Activated T-helper 2 cell treated with anti-CD3 and anti-CD28 coated beads, Interferon-gamma antibody, Interleukin-2, Interleukin-4, amounts not matched to agents 10 μg/mL and 5 μg/mL and 100 μg/mL, durations not matched to agents 14 hours and 24 hours and 36 hours (primary cell): ENCODE measurements at regions of chr4 and their contacts with region 1.

Region 1: DNA sequence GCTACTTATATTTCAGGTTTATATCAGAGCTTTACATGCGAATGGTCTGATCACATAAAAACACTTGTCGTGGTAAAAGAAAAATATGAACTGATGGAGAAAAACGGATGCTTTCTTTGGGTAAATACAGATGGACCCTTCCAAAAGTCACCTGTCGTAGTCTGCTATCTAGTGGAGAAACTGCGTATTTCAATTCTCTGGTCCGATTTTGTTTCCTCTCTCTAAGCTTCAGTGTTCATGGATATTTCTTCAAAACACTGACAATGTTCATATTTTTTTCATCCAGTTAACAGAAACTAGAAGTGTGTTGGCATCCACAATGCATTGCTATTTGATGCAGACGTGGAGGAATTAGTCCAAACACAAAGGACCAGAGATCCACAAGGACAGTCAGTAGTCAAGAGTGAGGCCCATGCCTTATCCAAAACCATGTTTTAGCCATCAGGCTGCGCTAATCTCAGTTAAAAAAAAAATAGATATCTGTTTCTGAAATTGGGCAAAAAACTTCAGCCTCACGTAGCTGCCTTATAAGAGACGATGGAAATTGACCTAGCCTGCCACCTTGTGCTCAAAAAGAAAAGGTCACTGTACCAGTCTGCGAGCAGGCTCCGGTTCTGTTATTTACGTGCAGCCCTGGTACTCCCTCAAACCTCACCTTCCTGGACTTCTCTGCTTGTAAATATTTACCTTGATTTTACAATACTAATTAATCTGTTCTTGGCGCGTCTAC is 16.0 kb downstream of the MEPE start:
- DNase-seq: no peak
- H3K4me3 Mint-ChIP-seq: no peak overlapping the region
- H3K27ac Mint-ChIP-seq: no peak overlapping the region
- H3K4me1 Mint-ChIP-seq: peaks cover 13% of the 10 kb centered on the region
- H3K27me3 Mint-ChIP-seq: peaks cover 34% of the 10 kb centered on the region

Region 2: DNA sequence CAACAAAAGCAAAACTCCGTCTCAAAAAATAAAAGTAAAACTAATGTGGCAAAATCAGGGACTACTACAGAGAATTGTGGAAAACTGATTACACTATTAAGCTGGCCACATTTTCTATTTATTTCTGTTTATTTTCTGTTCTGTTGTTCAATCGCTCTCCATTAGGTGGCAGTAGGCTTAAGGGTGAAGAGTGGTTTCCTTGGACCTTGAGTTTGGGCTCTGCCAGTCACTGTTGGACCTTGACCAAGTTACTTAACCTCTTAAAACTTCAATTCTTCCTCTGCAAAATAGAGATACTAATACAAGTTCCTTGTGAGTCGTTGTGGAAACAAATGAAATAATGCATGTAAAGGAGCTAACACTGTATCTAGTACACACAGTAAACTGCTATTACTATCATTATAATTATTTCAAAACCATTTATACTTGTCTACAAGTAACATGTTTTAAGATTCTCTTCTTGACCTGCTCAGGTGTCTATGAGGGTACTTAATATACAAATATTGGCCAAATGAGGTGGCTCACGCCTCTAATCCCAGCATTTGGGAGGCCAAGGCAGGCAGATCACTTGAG is 473.0 kb before region 1 on chr4:
- intact Hi-C with region 1: loop called (anchors 10 kb)
- DNase-seq: no peak
- H3K4me3 Mint-ChIP-seq: no peak overlapping the region
- H3K27ac Mint-ChIP-seq: no peak overlapping the region
- H3K4me1 Mint-ChIP-seq: peaks cover 2% of the 10 kb centered on the region
- H3K27me3 Mint-ChIP-seq: no peaks in the 10 kb centered on the region

Region 3: DNA sequence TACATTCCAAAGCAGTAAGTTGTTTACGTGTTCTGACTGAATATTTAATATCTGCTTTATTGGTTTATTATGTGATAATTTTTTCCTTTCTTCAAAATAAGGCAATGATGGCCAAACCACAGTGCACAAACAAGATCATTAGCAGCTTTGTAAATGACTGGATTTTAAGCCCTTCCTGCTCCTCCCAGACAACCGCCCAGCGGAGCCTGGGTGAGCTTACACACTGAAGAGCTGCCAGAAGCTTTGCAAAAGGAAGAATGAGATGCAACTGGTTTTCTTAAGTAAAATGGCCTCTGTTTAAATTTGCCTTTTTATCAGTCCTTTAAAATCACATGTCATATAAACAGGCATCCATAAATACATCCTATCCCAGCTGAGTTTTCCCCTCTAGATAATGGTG is 371.9 kb before region 1 on chr4:
- intact Hi-C with region 1: no loop called
- DNase-seq: no peak
- H3K4me3 Mint-ChIP-seq: no peak overlapping the region
- H3K27ac Mint-ChIP-seq: no peak overlapping the region
- H3K4me1 Mint-ChIP-seq: no peaks in the 10 kb centered on the region
- H3K27me3 Mint-ChIP-seq: no peaks in the 10 kb centered on the region

Region 4: DNA sequence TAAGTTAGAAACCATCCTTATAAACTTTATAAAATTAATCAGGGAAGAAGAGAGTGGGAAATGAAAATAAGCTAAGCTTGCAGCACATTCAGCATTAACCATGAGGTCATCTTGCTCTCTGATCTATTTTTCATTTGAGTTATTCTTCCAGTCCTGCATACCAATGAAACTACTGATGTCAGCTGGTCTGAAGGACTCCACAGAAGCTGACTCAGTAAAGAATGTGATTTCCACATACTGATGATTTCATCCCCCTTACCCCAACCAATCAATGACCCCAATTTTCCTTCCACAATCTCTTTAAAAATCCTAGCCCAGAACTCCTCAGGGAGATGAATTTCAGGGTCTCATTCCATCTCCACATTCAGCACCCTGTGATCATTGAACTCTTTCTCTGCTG is 259.3 kb before region 1 on chr4:
- intact Hi-C with region 1: no loop called
- DNase-seq: no peak
- H3K4me3 Mint-ChIP-seq: no peak overlapping the region
- H3K27ac Mint-ChIP-seq: no peak overlapping the region
- H3K4me1 Mint-ChIP-seq: no peaks in the 10 kb centered on the region
- H3K27me3 Mint-ChIP-seq: peaks cover 14% of the 10 kb centered on the region

Region 5: DNA sequence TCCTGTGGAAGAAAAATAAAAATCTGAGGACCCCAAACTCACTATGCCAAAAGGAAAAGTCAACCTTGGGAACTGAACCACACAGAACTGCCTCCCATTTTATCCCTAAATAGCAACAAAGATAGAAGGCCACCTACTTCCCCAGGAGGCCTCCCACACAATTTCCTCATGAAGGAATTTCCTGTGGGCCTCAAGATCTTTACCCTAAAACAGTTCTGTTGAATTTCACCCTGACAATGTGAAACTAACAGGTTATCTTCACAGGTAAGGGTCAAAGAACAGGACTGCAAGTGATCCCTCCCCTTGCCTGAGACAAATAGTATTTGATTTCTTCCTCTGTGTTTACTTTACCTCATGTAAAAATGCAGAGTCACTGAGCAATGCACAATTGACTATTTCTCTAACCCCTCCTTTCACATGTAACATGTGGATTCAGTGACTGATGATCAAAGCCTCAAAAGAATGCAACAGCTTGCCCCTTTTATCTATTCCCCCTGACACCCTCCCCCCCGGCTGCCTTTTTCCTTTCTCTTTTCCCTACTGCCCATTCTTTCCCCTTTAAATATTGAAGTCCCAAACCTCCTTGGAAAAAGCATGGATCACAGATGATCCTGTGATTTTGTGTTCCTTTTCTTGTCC is 17.3 kb after region 1 on chr4:
- intact Hi-C with region 1: no loop called
- DNase-seq: no peak
- H3K4me3 Mint-ChIP-seq: no peak overlapping the region
- H3K27ac Mint-ChIP-seq: no peak overlapping the region
- H3K4me1 Mint-ChIP-seq: no peaks in the 10 kb centered on the region
- H3K27me3 Mint-ChIP-seq: peaks cover 22% of the 10 kb centered on the region

Region 6: GRCh38 chr4:87973283-87974169 is 124.7 kb after region 1 on chr4:
- intact Hi-C with region 1: loop called (anchors 1 kb)
- DNase-seq: no peak
- H3K4me3 Mint-ChIP-seq: no peak overlapping the region
- H3K27ac Mint-ChIP-seq: no peak overlapping the region
- H3K4me1 Mint-ChIP-seq: peaks cover 6% of the 10 kb centered on the region
- H3K27me3 Mint-ChIP-seq: peaks cover 49% of the 10 kb centered on the region

Region 7: GRCh38 chr4:87985097-87985886 is 136.5 kb after region 1 on chr4:
- intact Hi-C with region 1: loop called (anchors 2 kb)
- DNase-seq: no peak
- H3K4me3 Mint-ChIP-seq: no peak overlapping the region
- H3K27ac Mint-ChIP-seq: no peak overlapping the region
- H3K4me1 Mint-ChIP-seq: peaks cover 8% of the 10 kb centered on the region
- H3K27me3 Mint-ChIP-seq: peaks cover 37% of the 10 kb centered on the region

Region 8: GRCh38 chr4:88514557-88515511 is 666.0 kb after region 1 on chr4:
- intact Hi-C with region 1: loop called (anchors 10 kb)
- DNase-seq: no peak
- H3K4me3 Mint-ChIP-seq: no peak overlapping the region
- H3K27ac Mint-ChIP-seq: no peak overlapping the region
- H3K4me1 Mint-ChIP-seq: no peaks in the 10 kb centered on the region
- H3K27me3 Mint-ChIP-seq: no peaks in the 10 kb centered on the region